ENCODE measurements at regions of chr2 and their contacts with region 1.

Region 1: GRCh38 chr2:47906157-47907038 is at the start of gene FBXO11:
- DNase-seq: peak; percentile 89 to 99 (median 96)

Region 2: GRCh38 chr2:47782671-47783485 is 123.5 kb before region 1 on chr2 and contains the start of gene MSH6:
- intact Hi-C with region 1: loop called (anchors 1 kb)
- DNase-seq: peak; percentile 80 to 97 (median 94)

Region 3: DNA sequence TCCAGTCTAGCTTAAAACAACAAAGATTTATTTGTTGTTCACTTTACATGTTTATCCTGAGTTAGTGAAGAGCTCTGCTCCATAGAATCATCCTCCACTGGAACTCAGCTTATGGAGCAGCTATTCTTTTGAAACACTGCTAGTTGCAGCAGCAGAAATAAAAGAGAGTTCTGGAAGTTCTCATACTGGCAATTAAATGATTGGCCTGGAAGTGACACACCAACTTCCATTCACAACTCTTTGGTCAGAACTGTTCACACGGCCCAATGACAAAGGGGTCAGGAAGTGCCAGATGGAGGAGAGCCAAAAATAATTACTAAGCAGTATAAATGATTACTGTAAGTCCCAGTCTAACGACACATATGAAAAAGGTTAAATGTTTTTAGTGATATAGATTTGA is 39.2 kb before region 1 on chr2:
- intact Hi-C with region 1: loop called (anchors 5 kb)
- DNase-seq: peak in 6 of 42 donors; percentile 8 to 65 (median 24)

Region 4: GRCh38 chr2:48070415-48070814 is 164.0 kb after region 1 on chr2:
- intact Hi-C with region 1: no loop called
- DNase-seq: peak in 14 of 42 donors; percentile 5 to 49 (median 18)

Region 5: GRCh38 chr2:48107326-48107925 is 201.0 kb after region 1 on chr2:
- intact Hi-C with region 1: loop called (anchors 2 kb)
- DNase-seq: no peak